H1 (cell line): ENCODE measurements at regions of chr3 and their contacts with region 1.

Region 1: GRCh38 chr3:67863869-67864268 is 209.5 kb upstream of the SUCLG2 start:
- DNase-seq: peak in 1 of 2 experiments; percentile 45
- H3K4me3 ChIP-seq: no peak overlapping the region
- H3K27ac ChIP-seq: no peak overlapping the region
- H3K4me1 ChIP-seq: peaks cover 0 to 3% (median 0%) of the 10 kb centered on the region in 4 experiments; a peak in 1 of 7 replicates
- H3K27me3 ChIP-seq: no peaks in the 10 kb centered on the region
- CTCF ChIP-seq: peak in 2 of 3 experiments; percentile 50 to 64; a peak in 3 of 4 replicates
- EP300 ChIP-seq: no peak
- POLR2A ChIP-seq: no peak
- RAD21 ChIP-seq: peak; percentile 53 to 65

Region 2: GRCh38 chr3:67819447-67819846 is 44.4 kb before region 1 on chr3:
- CTCF ChIA-PET with region 1: interaction called, 16 read pairs
- POLR2A ChIA-PET with region 1: no interaction called
- DNase-seq: no peak
- H3K4me3 ChIP-seq: no peak overlapping the region
- H3K27ac ChIP-seq: no peak overlapping the region
- H3K4me1 ChIP-seq: no peaks in the 10 kb centered on the region
- H3K27me3 ChIP-seq: no peaks in the 10 kb centered on the region
- CTCF ChIP-seq: peak; percentile 17 to 77 (median 71)
- EP300 ChIP-seq: no peak
- POLR2A ChIP-seq: no peak
- RAD21 ChIP-seq: peak; percentile 78 to 81

Region 3: DNA sequence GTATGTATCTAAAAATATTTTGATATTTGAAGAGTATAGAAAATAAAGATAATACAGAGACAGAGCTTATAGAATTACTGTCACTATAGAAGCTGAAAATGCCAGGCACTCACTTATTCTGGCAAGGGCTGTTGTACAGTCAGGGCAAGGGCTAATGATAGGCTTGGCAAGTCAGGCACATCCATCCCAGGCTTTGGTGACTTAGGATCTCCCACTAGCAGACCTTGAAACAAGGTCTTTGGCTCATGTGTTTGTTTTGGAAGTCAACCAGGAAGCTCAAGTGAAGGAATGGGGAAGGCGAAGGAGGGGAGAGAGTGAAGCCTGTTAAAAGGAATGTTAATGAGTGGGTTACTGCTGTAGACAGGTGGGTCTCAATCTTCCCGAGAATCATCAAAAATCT is 10.3 kb before region 1 on chr3:
- CTCF ChIA-PET with region 1: interaction called, 13 read pairs
- POLR2A ChIA-PET with region 1: no interaction called
- DNase-seq: no peak
- H3K4me3 ChIP-seq: no peak overlapping the region
- H3K27ac ChIP-seq: no peak overlapping the region
- H3K4me1 ChIP-seq: no peaks in the 10 kb centered on the region
- H3K27me3 ChIP-seq: no peaks in the 10 kb centered on the region; a peak in 1 of 7 replicates
- CTCF ChIP-seq: no peak
- EP300 ChIP-seq: no peak
- POLR2A ChIP-seq: no peak
- RAD21 ChIP-seq: no peak